Activated B cell treated with CpG ODN at 0.5 μM for 24 hours (primary cell): ENCODE measurements at regions of chr2 and their contacts with region 1.

Region 1: GRCh38 chr2:231706731-231707624 is 1.3 kb upstream of the PTMA start:
- DNase-seq: peak; percentile 94
- ATAC-seq: peak; percentile 47
- H3K4me3 Mint-ChIP-seq: peak overlapping the region; percentile 97
- H3K27ac Mint-ChIP-seq: peak overlapping the region; percentile 100
- H3K4me1 Mint-ChIP-seq: peaks cover 36% of the 10 kb centered on the region
- H3K27me3 Mint-ChIP-seq: no peaks in the 10 kb centered on the region
- CTCF ChIP-seq: peak; percentile 84

Region 2: GRCh38 chr2:231514103-231514950 is 192.7 kb before region 1 on chr2:
- CTCF ChIA-PET with region 1: no interaction called
- POLR2A ChIA-PET with region 1: interaction called, 4 read pairs
- intact Hi-C with region 1: loop called (anchors 2 kb)
- DNase-seq: peak; percentile 97
- ATAC-seq: peak; percentile 99
- H3K4me3 Mint-ChIP-seq: peak overlapping the region; percentile 92
- H3K27ac Mint-ChIP-seq: peak overlapping the region; percentile 96
- H3K4me1 Mint-ChIP-seq: peaks cover 13% of the 10 kb centered on the region
- H3K27me3 Mint-ChIP-seq: no peaks in the 10 kb centered on the region
- CTCF ChIP-seq: no peak

Region 3: GRCh38 chr2:231648587-231649174 is 58.3 kb before region 1 on chr2:
- CTCF ChIA-PET with region 1: interaction called, 5 read pairs
- POLR2A ChIA-PET with region 1: interaction called, 19 read pairs
- intact Hi-C with region 1: no loop called
- DNase-seq: peak; percentile 71
- ATAC-seq: peak; percentile 98
- H3K4me3 Mint-ChIP-seq: no peak overlapping the region
- H3K27ac Mint-ChIP-seq: peak overlapping the region; percentile 63
- H3K4me1 Mint-ChIP-seq: peaks cover 8% of the 10 kb centered on the region
- H3K27me3 Mint-ChIP-seq: no peaks in the 10 kb centered on the region
- CTCF ChIP-seq: no peak

Region 4: GRCh38 chr2:231674587-231675338 is 32.2 kb before region 1 on chr2:
- CTCF ChIA-PET with region 1: interaction called, 429 read pairs
- POLR2A ChIA-PET with region 1: interaction called, 717 read pairs
- intact Hi-C with region 1: loop called (anchors 1 kb)
- DNase-seq: peak; percentile 81
- ATAC-seq: peak; percentile 40
- H3K4me3 Mint-ChIP-seq: peak overlapping the region; percentile 64
- H3K27ac Mint-ChIP-seq: peak overlapping the region; percentile 98
- H3K4me1 Mint-ChIP-seq: peaks cover 77% of the 10 kb centered on the region
- H3K27me3 Mint-ChIP-seq: no peaks in the 10 kb centered on the region
- CTCF ChIP-seq: peak; percentile 83

Region 5: DNA sequence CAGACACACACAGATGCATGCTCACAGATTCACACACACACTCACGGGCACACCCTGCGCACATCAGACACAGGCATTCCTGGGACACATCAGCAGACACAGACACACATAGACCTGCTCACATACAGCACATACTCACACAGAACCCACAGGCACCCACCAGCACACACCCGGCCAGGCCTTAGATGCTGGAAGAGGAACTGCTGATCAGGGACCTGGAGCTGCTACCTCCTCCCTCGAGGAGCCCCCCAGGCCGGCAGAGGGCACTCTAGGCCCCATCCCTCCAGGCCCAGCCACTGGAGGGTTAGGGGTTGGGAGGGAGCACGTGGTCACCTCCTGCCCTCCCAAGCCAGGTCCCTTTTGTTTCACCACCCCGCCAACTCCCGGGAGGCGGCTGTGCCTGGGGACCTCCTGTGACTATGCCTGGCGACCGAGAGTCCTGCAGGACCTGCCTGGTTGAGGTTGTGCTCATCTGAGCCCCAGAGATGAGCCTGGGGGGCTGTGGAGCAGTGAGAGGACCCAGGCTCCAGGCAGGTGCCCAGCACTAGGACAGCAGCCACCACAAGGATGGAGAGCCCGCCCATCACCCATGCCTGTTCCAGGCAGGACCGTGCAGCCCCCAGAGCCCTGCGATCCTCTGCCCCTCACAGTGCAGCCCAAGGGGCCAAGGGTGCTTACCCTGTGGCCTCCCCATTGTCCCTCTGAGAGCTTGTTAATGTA is 19.7 kb before region 1 on chr2:
- CTCF ChIA-PET with region 1: interaction called, 429 read pairs
- POLR2A ChIA-PET with region 1: interaction called, 280 read pairs
- intact Hi-C with region 1: loop called (anchors 1 kb)
- DNase-seq: peak; percentile 68
- ATAC-seq: peak; percentile 91
- H3K4me3 Mint-ChIP-seq: no peak overlapping the region
- H3K27ac Mint-ChIP-seq: peak overlapping the region; percentile 32
- H3K4me1 Mint-ChIP-seq: peaks cover 39% of the 10 kb centered on the region
- H3K27me3 Mint-ChIP-seq: no peaks in the 10 kb centered on the region
- CTCF ChIP-seq: peak; percentile 39

Region 6: DNA sequence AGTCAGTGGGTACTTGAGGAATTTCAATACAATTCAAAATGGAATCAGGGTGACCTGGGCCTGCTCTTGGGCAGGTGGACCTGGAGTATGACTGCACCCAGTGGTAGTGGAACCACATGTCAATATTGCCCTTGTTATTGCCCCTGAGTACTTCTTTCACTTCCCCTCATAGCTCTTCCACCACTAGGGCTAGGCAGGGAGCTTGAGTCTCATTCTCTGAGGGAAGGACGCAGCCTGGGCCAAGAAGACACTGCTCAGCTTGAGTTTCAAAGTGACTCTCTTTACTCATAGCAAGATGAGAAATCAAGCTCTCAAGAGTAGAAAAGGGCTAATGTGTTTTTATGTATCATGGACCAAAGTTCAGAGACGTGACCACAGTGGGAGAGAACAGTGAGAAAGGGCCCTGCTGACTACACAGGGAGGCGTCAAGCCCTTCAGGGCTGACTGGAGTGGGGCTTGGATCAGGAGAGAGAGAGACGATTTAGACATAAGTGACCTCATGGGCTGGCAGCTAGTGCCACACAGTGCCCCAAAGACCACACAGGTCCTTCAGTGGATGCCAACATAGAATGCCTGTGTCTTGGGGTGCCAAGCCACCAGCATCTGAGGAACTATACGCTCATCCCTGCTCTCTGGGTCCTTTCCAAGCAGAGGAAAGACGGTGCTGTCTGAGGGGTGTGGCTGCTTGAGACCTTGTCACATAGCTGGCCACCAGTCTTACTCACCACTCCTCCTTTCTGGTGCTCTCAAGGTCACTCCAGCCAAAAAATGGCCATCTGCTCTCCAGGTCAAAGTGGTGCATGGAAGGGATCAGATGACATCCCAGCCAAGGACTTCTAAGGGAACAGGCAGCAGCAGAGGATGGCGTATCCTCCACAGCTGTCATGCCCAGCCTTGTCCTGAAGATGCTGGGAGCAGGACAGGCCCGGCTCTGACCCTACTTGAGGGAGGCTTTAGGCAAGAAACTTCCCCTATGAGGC is 14.3 kb after region 1 on chr2:
- CTCF ChIA-PET with region 1: interaction called, 4 read pairs
- POLR2A ChIA-PET with region 1: interaction called, 69 read pairs
- intact Hi-C with region 1: loop called (anchors 1 kb)
- DNase-seq: no peak
- ATAC-seq: peak; percentile 36
- H3K4me3 Mint-ChIP-seq: peak overlapping the region; percentile 5
- H3K27ac Mint-ChIP-seq: peak overlapping the region; percentile 16
- H3K4me1 Mint-ChIP-seq: peaks cover 44% of the 10 kb centered on the region
- H3K27me3 Mint-ChIP-seq: no peaks in the 10 kb centered on the region
- CTCF ChIP-seq: no peak

Region 7: GRCh38 chr2:231732604-231733003 is 25.6 kb after region 1 on chr2:
- CTCF ChIA-PET with region 1: no interaction called
- POLR2A ChIA-PET with region 1: no interaction called
- intact Hi-C with region 1: no loop called
- DNase-seq: no peak
- ATAC-seq: no peak
- H3K4me3 Mint-ChIP-seq: no peak overlapping the region
- H3K27ac Mint-ChIP-seq: no peak overlapping the region
- H3K4me1 Mint-ChIP-seq: no peaks in the 10 kb centered on the region
- H3K27me3 Mint-ChIP-seq: no peaks in the 10 kb centered on the region
- CTCF ChIP-seq: no peak

Region 8: GRCh38 chr2:231786177-231786916 is 79.4 kb after region 1 on chr2 and contains the start of gene COPS7B:
- CTCF ChIA-PET with region 1: no interaction called
- POLR2A ChIA-PET with region 1: interaction called, 12 read pairs
- intact Hi-C with region 1: loop called (anchors 1 kb)
- DNase-seq: peak; percentile 78
- ATAC-seq: peak; percentile 59
- H3K4me3 Mint-ChIP-seq: peak within 1 kb of the TSS; percentile 92
- H3K27ac Mint-ChIP-seq: peak within 1 kb of the TSS; percentile 82
- H3K4me1 Mint-ChIP-seq: peaks cover 54% of the 10 kb centered on the region
- H3K27me3 Mint-ChIP-seq: no peaks in the 10 kb centered on the region
- CTCF ChIP-seq: no peak
- total RNA-seq, gene COPS7B: 49.9 and 54.5 TPM in 2 replicates